ENCODE measurements at regions of chr14 and their contacts with region 1.

Region 1: GRCh38 chr14:87805315-87805723 is 187.7 kb downstream of the GALC start:
- DNase-seq: peak; percentile 39
- ATAC-seq: no peak

Region 2: GRCh38 chr14:87894920-87895319 is 89.6 kb after region 1 on chr14:
- intact Hi-C with region 1: loop called (anchors 2 kb)
- DNase-seq: no peak
- ATAC-seq: no peak

Measured in Right ventricle myocardium superior (tissue), 1 donor.